ENCODE measurements at regions of chr12 and their contacts with region 1.

Region 1: DNA sequence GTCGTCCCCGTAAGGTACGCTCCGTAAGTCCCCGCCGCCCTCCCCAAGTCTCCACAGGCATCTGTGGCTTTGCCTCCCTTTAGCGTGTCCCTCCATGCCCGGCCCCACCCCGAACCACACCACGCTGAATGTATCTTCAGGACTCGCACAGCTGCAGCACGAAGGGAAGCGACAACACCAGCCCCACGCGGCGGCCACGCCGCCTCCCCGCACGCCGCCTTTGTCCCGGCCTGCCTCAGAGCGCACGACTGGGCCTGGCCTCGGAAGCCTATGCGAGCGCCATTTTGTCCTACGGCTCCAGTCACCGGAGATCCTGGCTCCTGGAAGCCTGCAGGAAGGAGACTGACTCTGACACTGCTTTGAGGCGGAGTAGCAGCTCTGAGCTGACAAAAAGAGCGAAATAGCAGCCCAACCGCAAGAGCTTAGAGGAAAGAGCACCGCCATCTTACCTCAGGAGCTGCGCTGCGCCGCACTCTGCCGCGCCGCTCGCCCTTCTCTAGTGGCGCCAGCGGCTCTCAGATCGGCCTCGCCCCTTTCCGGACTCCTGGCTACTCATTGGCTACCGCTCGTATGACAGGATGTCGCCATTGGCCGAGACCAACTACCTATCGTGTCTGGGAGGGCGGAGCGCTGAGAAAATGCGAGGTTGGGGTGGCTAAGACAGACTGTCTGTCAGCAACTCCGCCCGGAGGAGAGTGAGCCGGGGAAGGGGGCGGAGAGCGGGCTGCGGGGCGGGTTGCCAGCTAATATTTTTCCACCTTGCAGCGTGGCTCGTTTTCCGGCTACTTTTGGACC is at the start of gene KANSL2:
- DNase-seq: peak; percentile 88 to 91
- H3K4me3 ChIP-seq: peak within 1 kb of the TSS; percentile 80 to 92 (median 86)
- H3K27ac ChIP-seq: peak within 1 kb of the TSS; percentile 96
- H3K4me1 ChIP-seq: peaks cover 0 to 3% (median under 1%) of the 10 kb centered on the region in 4 experiments; a peak in 3 of 7 replicates
- H3K27me3 ChIP-seq: no peaks in the 10 kb centered on the region
- CTCF ChIP-seq: no peak
- EP300 ChIP-seq: no peak
- POLR2A ChIP-seq: peak; percentile 99
- RAD21 ChIP-seq: no peak
- total RNA-seq, gene KANSL2: 46.1 and 48.4 TPM in 2 replicates

Region 2: GRCh38 chr12:48651681-48652080 is 30.3 kb before region 1 on chr12:
- CTCF ChIA-PET with region 1: no interaction called
- POLR2A ChIA-PET with region 1: interaction called, 11 read pairs
- DNase-seq: no peak
- H3K4me3 ChIP-seq: no peak overlapping the region
- H3K27ac ChIP-seq: no peak overlapping the region
- H3K4me1 ChIP-seq: no peaks in the 10 kb centered on the region
- H3K27me3 ChIP-seq: no peaks in the 10 kb centered on the region
- CTCF ChIP-seq: no peak
- EP300 ChIP-seq: no peak
- POLR2A ChIP-seq: no peak
- RAD21 ChIP-seq: no peak

Region 3: GRCh38 chr12:48659863-48660262 is 22.1 kb before region 1 on chr12:
- CTCF ChIA-PET with region 1: no interaction called
- POLR2A ChIA-PET with region 1: interaction called, 13 read pairs
- DNase-seq: no peak
- H3K4me3 ChIP-seq: no peak overlapping the region
- H3K27ac ChIP-seq: no peak overlapping the region
- H3K4me1 ChIP-seq: no peaks in the 10 kb centered on the region
- H3K27me3 ChIP-seq: no peaks in the 10 kb centered on the region
- CTCF ChIP-seq: no peak
- EP300 ChIP-seq: no peak
- POLR2A ChIP-seq: no peak
- RAD21 ChIP-seq: no peak

Region 4: GRCh38 chr12:48671231-48671856 is 10.6 kb before region 1 on chr12:
- CTCF ChIA-PET with region 1: no interaction called
- POLR2A ChIA-PET with region 1: interaction called, 18 read pairs
- DNase-seq: no peak
- H3K4me3 ChIP-seq: no peak overlapping the region
- H3K27ac ChIP-seq: no peak overlapping the region
- H3K4me1 ChIP-seq: no peaks in the 10 kb centered on the region
- H3K27me3 ChIP-seq: no peaks in the 10 kb centered on the region
- CTCF ChIP-seq: no peak
- EP300 ChIP-seq: no peak
- POLR2A ChIP-seq: no peak
- RAD21 ChIP-seq: no peak

Region 5: GRCh38 chr12:48696626-48697025 is 14.7 kb after region 1 on chr12:
- CTCF ChIA-PET with region 1: no interaction called
- POLR2A ChIA-PET with region 1: interaction called, 16 read pairs
- DNase-seq: no peak
- H3K4me3 ChIP-seq: no peak overlapping the region
- H3K27ac ChIP-seq: no peak overlapping the region
- H3K4me1 ChIP-seq: no peaks in the 10 kb centered on the region
- H3K27me3 ChIP-seq: no peaks in the 10 kb centered on the region
- CTCF ChIP-seq: no peak
- EP300 ChIP-seq: no peak
- POLR2A ChIP-seq: no peak
- RAD21 ChIP-seq: no peak

Region 6: DNA sequence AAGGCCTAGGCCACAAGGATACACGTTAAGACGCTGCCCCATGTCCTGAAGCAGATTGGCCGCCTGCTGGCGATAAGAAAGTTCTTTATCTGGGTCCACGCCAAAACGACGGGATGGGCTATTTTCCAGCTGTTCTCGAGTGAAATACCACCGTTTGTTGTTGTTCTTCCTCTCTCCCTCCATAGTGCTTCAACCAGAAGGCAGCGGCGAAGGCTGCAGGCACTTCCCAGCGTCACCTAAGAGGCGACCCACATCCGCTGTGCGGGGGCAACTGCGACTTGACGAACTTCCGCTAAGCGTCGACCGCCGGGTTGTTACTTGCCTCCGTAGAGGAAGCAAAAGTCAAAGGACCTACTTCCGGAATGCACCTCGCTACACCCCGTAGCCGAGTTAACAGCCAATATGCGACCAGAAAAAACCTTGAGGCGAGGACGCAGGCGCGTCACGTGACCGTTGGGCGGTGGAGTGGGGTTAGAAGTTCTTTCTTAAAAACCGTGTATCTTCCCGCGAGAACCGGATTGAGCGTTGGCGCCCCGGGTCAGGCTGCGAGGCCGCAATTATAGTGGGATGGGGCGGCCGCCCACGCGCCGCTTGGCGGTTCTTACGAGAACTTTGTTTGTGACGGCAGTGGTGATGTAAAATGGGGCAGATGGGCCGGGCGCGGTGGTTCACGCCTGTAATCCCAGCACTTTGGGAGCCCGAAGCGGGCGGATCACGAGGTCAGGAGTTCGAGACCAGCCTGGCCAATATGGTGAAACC is 34.7 kb after region 1 on chr12 and contains the start of gene CCNT1:
- CTCF ChIA-PET with region 1: interaction called, 3 read pairs
- POLR2A ChIA-PET with region 1: interaction called, 17 read pairs
- DNase-seq: peak; percentile 93 to 99
- H3K4me3 ChIP-seq: peak within 1 kb of the TSS; percentile 87 to 100 (median 97)
- H3K27ac ChIP-seq: peak within 1 kb of the TSS; percentile 97
- H3K4me1 ChIP-seq: peaks cover 0 to 5% (median 0%) of the 10 kb centered on the region in 4 experiments; a peak in 3 of 7 replicates
- H3K27me3 ChIP-seq: no peaks in the 10 kb centered on the region
- CTCF ChIP-seq: no peak
- EP300 ChIP-seq: no peak
- POLR2A ChIP-seq: peak; percentile 65 to 84
- RAD21 ChIP-seq: no peak
- total RNA-seq, gene CCNT1: 44.3 and 45.9 TPM in 2 replicates

Region 7: DNA sequence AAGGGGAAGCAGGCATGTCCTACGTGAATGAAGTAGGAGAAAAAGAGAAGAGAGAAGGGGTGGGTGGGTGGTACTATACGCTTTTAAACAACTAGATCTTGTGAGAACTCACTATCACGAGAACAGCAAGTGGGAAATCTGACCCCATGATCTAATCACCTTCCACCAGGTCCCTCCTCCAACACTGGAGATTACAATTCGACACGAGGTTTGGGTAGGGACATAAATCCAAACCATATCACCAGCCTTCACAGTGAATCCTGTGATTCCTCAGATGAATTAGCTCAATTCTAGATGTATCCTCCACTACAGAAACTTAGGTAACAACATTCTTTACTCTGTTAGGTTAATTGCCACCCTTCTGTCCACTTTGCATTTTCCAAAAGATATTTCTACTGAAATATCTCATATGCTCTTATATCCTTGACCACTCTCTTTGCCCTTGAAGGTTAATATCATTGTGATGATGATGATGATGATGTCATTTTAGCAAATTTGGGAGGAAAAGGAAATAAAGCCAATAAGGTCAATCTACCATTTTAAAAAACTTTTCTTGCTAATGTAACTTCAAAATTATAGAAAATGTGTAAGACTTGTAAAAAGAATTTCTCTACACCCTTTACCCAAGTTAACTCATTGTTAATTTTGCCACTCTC is 57.8 kb after region 1 on chr12:
- CTCF ChIA-PET with region 1: no interaction called
- POLR2A ChIA-PET with region 1: no interaction called
- DNase-seq: no peak
- H3K4me3 ChIP-seq: no peak overlapping the region
- H3K27ac ChIP-seq: no peak overlapping the region
- H3K4me1 ChIP-seq: no peaks in the 10 kb centered on the region
- H3K27me3 ChIP-seq: no peaks in the 10 kb centered on the region
- CTCF ChIP-seq: no peak
- EP300 ChIP-seq: no peak
- POLR2A ChIP-seq: no peak
- RAD21 ChIP-seq: no peak

Measured in H1 (cell line).